Stomach (tissue), 19 donors: ENCODE measurements at regions of chr9 and their contacts with region 1.

Region 1: GRCh38 chr9:27539479-27540441 is 10.1 kb upstream of the MOB3B start:
- DNase-seq: peak in 1 of 2 donors; percentile 70
- H3K4me3 ChIP-seq: no peak overlapping the region
- H3K27ac ChIP-seq: peak overlapping the region in 4 of 5 donors; percentile 68 to 87 (median 74)
- H3K4me1 ChIP-seq: peaks cover 14 to 59% (median 23%) of the 10 kb centered on the region in 4 donors
- H3K27me3 ChIP-seq: no peaks in the 10 kb centered on the region
- CTCF ChIP-seq: no peak
- EP300 ChIP-seq: peak; percentile 82
- POLR2A ChIP-seq: no peak

Region 2: GRCh38 chr9:27329288-27329687 is 210.5 kb before region 1 on chr9:
- intact Hi-C with region 1: loop called (anchors 5 kb)
- DNase-seq: no peak
- H3K4me3 ChIP-seq: no peak overlapping the region
- H3K27ac ChIP-seq: no peak overlapping the region
- H3K4me1 ChIP-seq: peaks cover 0 to 12% (median 8%) of the 10 kb centered on the region in 4 donors
- H3K27me3 ChIP-seq: no peaks in the 10 kb centered on the region
- CTCF ChIP-seq: no peak
- EP300 ChIP-seq: no peak
- POLR2A ChIP-seq: no peak